ENCODE measurements at regions of chr2 and their contacts with region 1.

Region 1: DNA sequence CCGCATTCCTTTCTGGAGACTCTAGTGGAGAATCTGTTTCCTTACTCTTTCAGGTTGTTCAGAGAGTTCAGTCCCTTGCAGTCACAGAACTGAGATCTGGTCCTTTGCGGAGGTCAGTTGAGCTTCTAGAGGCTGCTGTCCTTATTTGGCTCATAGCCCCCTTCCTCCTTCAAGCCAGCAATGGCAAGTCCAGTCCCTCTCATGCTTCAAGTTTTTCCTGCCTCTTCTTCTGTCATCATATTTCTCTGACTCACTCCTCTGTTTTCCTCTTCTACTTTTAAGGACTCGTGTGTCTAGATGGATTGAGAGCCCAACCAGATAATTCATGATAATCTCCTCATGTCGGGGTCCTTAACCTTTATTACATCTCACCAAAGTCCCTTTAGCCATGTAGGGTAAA is 173.5 kb upstream of the FOSL2 start:
- DNase-seq: no peak
- H3K4me3 ChIP-seq: no peak overlapping the region
- H3K27ac ChIP-seq: no peak overlapping the region
- H3K4me1 ChIP-seq: peaks cover 20% of the 10 kb centered on the region
- H3K27me3 ChIP-seq: no peaks in the 10 kb centered on the region
- CTCF ChIP-seq: no peak

Region 2: DNA sequence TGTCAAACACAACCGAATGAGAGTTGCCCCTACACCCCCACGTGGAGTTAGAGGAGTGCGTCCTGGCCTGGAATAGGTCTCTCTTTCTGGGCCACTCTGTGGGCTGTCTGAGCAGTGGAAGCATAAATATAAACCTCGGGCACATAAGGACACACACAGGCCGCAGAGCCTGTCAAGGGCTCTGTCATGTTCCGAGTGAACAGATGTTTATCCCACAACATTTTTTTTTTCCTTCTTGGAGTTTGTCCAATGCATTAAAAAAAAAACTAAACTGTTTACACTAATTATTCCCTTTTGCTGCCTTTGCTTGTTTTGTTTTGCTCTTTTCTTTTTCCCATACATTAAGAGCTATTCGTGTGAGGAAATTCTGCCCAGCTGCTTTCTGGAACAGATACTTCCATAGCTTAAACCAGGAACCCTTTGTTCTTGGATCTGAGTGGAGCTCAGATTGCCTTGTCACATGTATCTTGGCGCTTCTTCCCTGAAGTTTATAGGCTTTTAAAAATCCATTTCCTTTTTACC is 54.8 kb before region 1 on chr2:
- intact Hi-C with region 1: loop called (anchors 10 kb)
- DNase-seq: peak; percentile 41
- H3K4me3 ChIP-seq: peak overlapping the region; percentile 18
- H3K27ac ChIP-seq: peak overlapping the region; percentile 82
- H3K4me1 ChIP-seq: peaks cover 52% of the 10 kb centered on the region
- H3K27me3 ChIP-seq: no peaks in the 10 kb centered on the region
- CTCF ChIP-seq: peak; percentile 10

Region 3: GRCh38 chr2:28452534-28453081 is 233.5 kb after region 1 on chr2:
- intact Hi-C with region 1: no loop called
- DNase-seq: peak; percentile 74
- H3K4me3 ChIP-seq: no peak overlapping the region
- H3K27ac ChIP-seq: no peak overlapping the region
- H3K4me1 ChIP-seq: peaks cover 13% of the 10 kb centered on the region
- H3K27me3 ChIP-seq: no peaks in the 10 kb centered on the region
- CTCF ChIP-seq: peak; percentile 91

Region 4: GRCh38 chr2:28583899-28584553 is 364.9 kb after region 1 on chr2:
- intact Hi-C with region 1: no loop called
- DNase-seq: peak; percentile 82
- H3K4me3 ChIP-seq: no peak overlapping the region
- H3K27ac ChIP-seq: peak overlapping the region; percentile 89
- H3K4me1 ChIP-seq: peaks cover 39% of the 10 kb centered on the region
- H3K27me3 ChIP-seq: no peaks in the 10 kb centered on the region
- CTCF ChIP-seq: no peak

Measured in left ventricle myocardium inferior (tissue), 1 donor.